Panc1 (cell line): ENCODE measurements at regions of chr7 and their contacts with region 1.

Region 1: GRCh38 chr7:117008883-117009531 is 55.7 kb downstream of the ST7 start:
- DNase-seq: no peak
- ATAC-seq: no peak
- H3K4me3 ChIP-seq: no peak overlapping the region
- H3K27ac ChIP-seq: no peak overlapping the region
- H3K4me1 ChIP-seq: peaks cover 8% of the 10 kb centered on the region; the same call in 1 of the 2 replicates
- H3K27me3 ChIP-seq: no peaks in the 10 kb centered on the region
- CTCF ChIP-seq: no peak

Region 2: DNA sequence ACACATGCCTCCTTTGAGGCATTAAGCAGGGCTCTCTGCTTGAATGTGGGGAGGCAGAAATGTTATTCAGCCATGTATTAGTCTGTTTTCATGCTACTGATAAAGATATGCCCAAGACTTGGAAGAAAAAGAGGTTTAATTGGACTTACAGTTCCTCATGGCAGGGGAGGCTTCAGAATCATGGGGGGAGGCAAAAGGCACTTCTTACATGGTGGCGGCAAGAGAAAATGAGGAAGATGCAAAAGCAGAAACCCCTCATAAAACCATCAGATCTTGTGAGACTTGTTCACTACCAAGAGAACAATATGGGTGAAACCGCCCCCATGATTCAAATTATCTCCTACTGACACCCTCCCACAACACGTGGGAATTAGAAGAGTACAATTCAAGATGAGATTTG is 17.8 kb before region 1 on chr7:
- CTCF ChIA-PET with region 1: interaction called, 17 read pairs
- POLR2A ChIA-PET with region 1: no interaction called
- in situ Hi-C with region 1: no loop called
- intact Hi-C with region 1: no loop called
- DNase-seq: no peak
- ATAC-seq: no peak
- H3K4me3 ChIP-seq: no peak overlapping the region
- H3K27ac ChIP-seq: no peak overlapping the region
- H3K4me1 ChIP-seq: no peaks in the 10 kb centered on the region; the same call in 1 of the 2 replicates
- H3K27me3 ChIP-seq: no peaks in the 10 kb centered on the region
- CTCF ChIP-seq: no peak

Region 3: GRCh38 chr7:117021366-117021765 is 12.4 kb after region 1 on chr7:
- CTCF ChIA-PET with region 1: interaction called, 11 read pairs
- POLR2A ChIA-PET with region 1: no interaction called
- in situ Hi-C with region 1: no loop called
- intact Hi-C with region 1: no loop called
- DNase-seq: no peak
- ATAC-seq: no peak
- H3K4me3 ChIP-seq: peak overlapping the region in 1 of 2 experiments; percentile 24; a peak in 1 of 4 replicates
- H3K27ac ChIP-seq: no peak overlapping the region
- H3K4me1 ChIP-seq: peaks cover 12% of the 10 kb centered on the region
- H3K27me3 ChIP-seq: no peaks in the 10 kb centered on the region
- CTCF ChIP-seq: no peak

Region 4: DNA sequence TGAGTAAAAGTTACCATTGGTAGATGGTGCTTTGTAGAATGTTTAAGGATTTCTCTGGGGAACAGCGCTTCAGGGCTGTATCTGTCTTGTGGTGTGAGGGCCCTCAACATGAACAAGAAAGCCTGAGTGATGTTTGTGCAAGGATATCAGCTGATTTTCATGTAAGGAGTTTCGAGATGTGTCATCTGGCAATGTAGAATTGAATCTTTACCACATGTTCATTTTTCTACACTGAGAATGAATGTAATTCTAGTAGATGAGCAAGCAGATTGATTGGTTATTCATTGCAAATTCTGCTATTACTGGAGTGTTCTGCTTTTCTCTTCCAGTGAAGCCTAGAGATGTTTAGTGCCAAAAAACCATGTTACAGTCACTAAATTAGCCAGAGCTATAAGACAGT is 32.0 kb after region 1 on chr7:
- CTCF ChIA-PET with region 1: no interaction called
- POLR2A ChIA-PET with region 1: no interaction called
- in situ Hi-C with region 1: no loop called
- intact Hi-C with region 1: no loop called
- DNase-seq: no peak
- ATAC-seq: no peak
- H3K4me3 ChIP-seq: no peak overlapping the region
- H3K27ac ChIP-seq: no peak overlapping the region
- H3K4me1 ChIP-seq: peaks cover 1% of the 10 kb centered on the region; the same call in 1 of the 2 replicates
- H3K27me3 ChIP-seq: no peaks in the 10 kb centered on the region
- CTCF ChIP-seq: no peak